GM12878 (cell line): ENCODE measurements at regions of chr21 and their contacts with region 1.

Region 1: DNA sequence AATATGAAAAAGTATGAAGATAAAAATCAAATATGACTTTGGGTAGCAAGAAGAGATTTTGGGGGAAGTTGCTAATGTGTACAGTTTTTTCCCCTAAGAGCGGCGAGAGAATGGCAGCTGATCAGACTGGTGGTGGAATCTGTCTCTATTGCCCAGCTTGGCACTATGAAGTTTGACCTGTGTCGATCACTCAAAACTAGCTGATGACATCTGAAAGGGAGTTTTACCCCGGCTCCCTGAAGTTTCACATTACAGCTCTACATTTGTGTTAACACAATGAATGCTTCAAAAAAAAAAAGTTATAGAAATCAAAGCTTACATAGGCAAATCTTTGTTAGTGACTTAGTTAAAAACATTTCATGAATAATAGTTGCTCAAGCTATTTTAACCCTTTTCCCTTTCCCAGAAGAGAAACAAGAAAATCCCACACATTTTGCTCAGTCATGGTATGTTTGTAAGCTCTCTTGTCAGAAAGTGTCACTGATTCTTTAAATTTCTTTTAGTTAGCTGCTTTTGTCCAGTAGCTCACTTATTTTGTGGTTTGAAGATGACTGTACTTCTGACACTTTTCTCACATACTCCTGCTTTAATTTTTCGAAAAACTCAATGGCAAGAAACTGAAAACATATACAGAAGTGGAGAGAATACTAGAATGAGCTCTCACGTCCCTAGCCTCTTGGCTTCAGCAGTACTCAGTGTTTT is 41.3 kb downstream of the DYRK1A start:
- DNase-seq: peak; percentile 43
- ATAC-seq: peak; percentile 75
- H3K4me3 ChIP-seq: peak overlapping the region; percentile 0; the same call in 1 of the 2 replicates
- H3K27ac ChIP-seq: peak overlapping the region; percentile 39
- H3K4me1 ChIP-seq: peaks cover 47% of the 10 kb centered on the region
- H3K27me3 ChIP-seq: no peaks in the 10 kb centered on the region
- CTCF ChIP-seq: no peak
- EP300 ChIP-seq: no peak
- POLR2A ChIP-seq: no peak
- RAD21 ChIP-seq: no peak

Region 2: DNA sequence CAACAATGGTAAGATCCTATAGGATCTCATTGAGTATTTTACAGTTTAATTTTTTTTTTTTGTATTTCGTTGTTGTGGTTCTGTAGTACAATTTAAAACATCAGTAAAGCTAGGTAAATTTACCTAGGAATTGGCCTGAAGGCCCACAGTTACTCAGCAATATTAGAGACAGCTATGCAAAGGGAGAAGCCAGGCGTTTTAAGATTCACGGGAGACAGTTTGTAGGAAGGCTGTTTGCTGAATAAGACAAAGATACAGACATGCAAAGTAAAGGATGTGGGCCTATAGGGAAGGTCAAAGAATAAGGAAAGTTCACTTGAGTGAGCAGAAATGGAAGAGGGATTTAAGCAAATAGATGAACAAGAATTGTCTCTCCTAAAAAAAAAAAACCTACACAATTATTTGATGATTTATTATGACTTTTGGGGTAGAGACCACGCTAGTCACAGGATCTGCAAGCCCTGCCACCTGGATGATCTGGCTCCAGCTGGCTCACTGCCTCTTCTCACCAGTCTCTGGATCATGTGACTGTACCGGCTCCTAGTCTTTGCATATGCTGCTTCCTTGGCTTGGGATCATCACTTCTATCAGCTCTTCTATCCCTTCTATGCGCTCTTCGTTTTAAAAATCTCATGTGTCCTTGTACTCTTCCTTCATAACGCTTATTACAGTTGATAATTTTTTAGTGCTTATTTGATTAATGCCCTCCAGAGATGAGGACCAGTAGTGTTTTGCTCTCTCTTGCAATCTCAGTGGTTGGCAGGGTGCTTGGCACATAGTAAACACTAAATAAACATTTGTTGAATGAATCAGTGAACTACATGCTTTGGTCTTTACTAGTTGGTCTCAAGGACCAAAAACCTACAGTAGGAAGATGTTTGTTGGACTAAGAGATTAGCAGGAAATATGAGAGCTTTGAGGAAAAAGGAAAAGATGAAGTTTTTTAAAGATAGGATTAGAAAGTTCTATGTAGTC is 27.2 kb before region 1 on chr21:
- CTCF ChIA-PET with region 1: interaction called, 5 read pairs
- POLR2A ChIA-PET with region 1: interaction called, 7 read pairs
- RAD21 ChIA-PET with region 1: interaction called, 5 read pairs
- SMC1A ChIA-PET with region 1: interaction called, 15 read pairs
- in situ Hi-C with region 1: no loop called
- intact Hi-C with region 1: no loop called
- DNase-seq: no peak
- ATAC-seq: no peak
- H3K4me3 ChIP-seq: no peak overlapping the region
- H3K27ac ChIP-seq: no peak overlapping the region
- H3K4me1 ChIP-seq: peaks cover 7% of the 10 kb centered on the region
- H3K27me3 ChIP-seq: no peaks in the 10 kb centered on the region
- CTCF ChIP-seq: no peak
- EP300 ChIP-seq: no peak
- POLR2A ChIP-seq: no peak
- RAD21 ChIP-seq: no peak

Region 3: DNA sequence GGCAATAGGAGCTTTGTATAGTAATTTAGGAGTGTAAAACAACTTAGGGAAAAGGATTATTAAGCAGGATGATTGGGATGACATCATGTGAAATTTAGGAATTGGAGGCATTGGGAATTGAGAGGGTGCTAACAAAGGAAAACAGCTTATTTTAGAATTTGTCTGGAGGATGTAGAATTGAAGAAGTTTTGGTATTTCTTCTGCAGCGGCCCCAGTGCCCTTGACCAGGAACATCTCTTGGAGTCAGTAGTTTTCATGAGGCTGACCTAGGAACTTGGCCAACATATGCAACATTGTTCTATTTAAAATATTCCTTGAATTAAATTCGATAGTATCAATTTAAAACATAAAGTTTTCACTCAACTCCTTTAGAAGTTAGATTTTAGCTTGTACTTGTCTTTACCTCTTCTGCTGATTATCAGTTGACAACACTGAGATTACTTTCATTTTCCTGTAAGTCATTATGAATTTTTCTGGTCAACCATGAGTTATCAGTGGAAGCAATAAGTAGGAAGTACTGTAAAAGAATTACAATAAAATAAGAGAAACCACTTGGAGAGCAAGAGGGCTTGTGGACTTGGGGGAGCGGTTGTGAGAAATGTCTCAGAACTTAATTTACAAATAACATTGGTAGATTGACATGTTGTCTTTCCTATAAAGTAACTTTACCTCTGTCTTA is 11.5 kb after region 1 on chr21:
- CTCF ChIA-PET with region 1: interaction called, 3 read pairs
- POLR2A ChIA-PET with region 1: interaction called, 3 read pairs
- RAD21 ChIA-PET with region 1: interaction called, 7 read pairs
- SMC1A ChIA-PET with region 1: interaction called, 24 read pairs
- in situ Hi-C with region 1: no loop called
- intact Hi-C with region 1: no loop called
- DNase-seq: no peak
- ATAC-seq: peak; percentile 32; the same call in 1 of the 3 replicates
- H3K4me3 ChIP-seq: no peak overlapping the region
- H3K27ac ChIP-seq: no peak overlapping the region
- H3K4me1 ChIP-seq: peaks cover 17% of the 10 kb centered on the region
- H3K27me3 ChIP-seq: no peaks in the 10 kb centered on the region
- CTCF ChIP-seq: no peak
- EP300 ChIP-seq: no peak
- POLR2A ChIP-seq: no peak
- RAD21 ChIP-seq: no peak

Region 4: GRCh38 chr21:37445228-37445627 is 37.4 kb after region 1 on chr21:
- CTCF ChIA-PET with region 1: no interaction called
- POLR2A ChIA-PET with region 1: no interaction called
- RAD21 ChIA-PET with region 1: no interaction called
- SMC1A ChIA-PET with region 1: no interaction called
- in situ Hi-C with region 1: no loop called
- intact Hi-C with region 1: no loop called
- DNase-seq: no peak
- ATAC-seq: no peak
- H3K4me3 ChIP-seq: no peak overlapping the region
- H3K27ac ChIP-seq: no peak overlapping the region
- H3K4me1 ChIP-seq: no peaks in the 10 kb centered on the region
- H3K27me3 ChIP-seq: no peaks in the 10 kb centered on the region
- CTCF ChIP-seq: no peak
- EP300 ChIP-seq: no peak
- POLR2A ChIP-seq: no peak
- RAD21 ChIP-seq: no peak

Region 5: GRCh38 chr21:37503848-37504467 is 96.1 kb after region 1 on chr21:
- CTCF ChIA-PET with region 1: no interaction called
- POLR2A ChIA-PET with region 1: no interaction called
- RAD21 ChIA-PET with region 1: no interaction called
- SMC1A ChIA-PET with region 1: no interaction called
- in situ Hi-C with region 1: no loop called
- intact Hi-C with region 1: no loop called
- DNase-seq: no peak
- ATAC-seq: no peak
- H3K4me3 ChIP-seq: no peak overlapping the region
- H3K27ac ChIP-seq: no peak overlapping the region
- H3K4me1 ChIP-seq: peaks cover 8% of the 10 kb centered on the region
- H3K27me3 ChIP-seq: no peaks in the 10 kb centered on the region
- CTCF ChIP-seq: no peak
- EP300 ChIP-seq: no peak
- POLR2A ChIP-seq: no peak
- RAD21 ChIP-seq: no peak